Caco-2 (cell line): ENCODE measurements at regions of chr5 and their contacts with region 1.

Region 1: DNA sequence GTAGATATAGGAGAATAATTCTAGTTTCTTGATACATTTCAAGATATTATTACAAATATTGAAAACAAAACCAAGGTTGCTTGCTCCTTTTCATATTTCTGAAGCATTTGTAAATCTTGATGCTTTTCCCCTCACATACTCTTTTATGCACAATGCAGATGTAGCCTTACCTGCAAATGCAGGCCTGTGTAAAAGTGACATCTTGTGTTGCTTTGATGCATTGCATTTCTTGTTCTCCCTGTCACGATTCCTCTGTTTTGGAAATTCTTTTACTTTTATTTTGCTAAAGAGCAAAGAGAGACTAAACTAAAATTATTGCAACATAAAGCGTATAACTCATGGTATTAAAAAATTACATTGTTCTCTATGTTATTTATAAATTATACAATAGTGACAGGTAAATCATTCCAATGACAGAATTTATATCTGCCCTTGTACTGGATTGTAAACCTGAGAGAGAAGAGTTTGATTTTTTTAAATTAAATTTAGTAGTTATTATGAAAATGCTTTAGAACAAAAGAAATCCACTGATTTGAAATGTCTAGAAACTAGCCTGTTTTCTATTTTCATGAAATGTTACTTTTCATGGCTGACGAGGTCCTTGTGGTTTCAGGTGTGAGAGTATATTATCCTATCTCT is 970.0 kb downstream of the MAT2B start:
- DNase-seq: peak in 1 of 2 experiments; percentile 19
- H3K4me3 ChIP-seq: no peak overlapping the region
- H3K4me3 Mint-ChIP-seq: no peak overlapping the region
- H3K27ac Mint-ChIP-seq: no peak overlapping the region
- H3K4me1 ChIP-seq: no peaks in the 10 kb centered on the region
- H3K4me1 Mint-ChIP-seq: no peaks in the 10 kb centered on the region
- H3K27me3 ChIP-seq: no peaks in the 10 kb centered on the region
- H3K27me3 Mint-ChIP-seq: peaks cover 4% of the 10 kb centered on the region
- CTCF ChIP-seq: peak; percentile 40 to 56

Region 2: GRCh38 chr5:164048359-164048926 is 427.0 kb before region 1 on chr5:
- CTCF ChIA-PET with region 1: no interaction called
- POLR2A ChIA-PET with region 1: no interaction called
- intact Hi-C with region 1: loop called (anchors 1 kb)
- DNase-seq: no peak
- H3K4me3 ChIP-seq: no peak overlapping the region
- H3K4me3 Mint-ChIP-seq: no peak overlapping the region
- H3K27ac Mint-ChIP-seq: no peak overlapping the region
- H3K4me1 ChIP-seq: no peaks in the 10 kb centered on the region
- H3K4me1 Mint-ChIP-seq: no peaks in the 10 kb centered on the region
- H3K27me3 ChIP-seq: no peaks in the 10 kb centered on the region
- H3K27me3 Mint-ChIP-seq: peaks cover 5% of the 10 kb centered on the region
- CTCF ChIP-seq: no peak